Ovary (tissue), 10 donors: ENCODE measurements at regions of chr10 and their contacts with region 1.

Region 1: DNA sequence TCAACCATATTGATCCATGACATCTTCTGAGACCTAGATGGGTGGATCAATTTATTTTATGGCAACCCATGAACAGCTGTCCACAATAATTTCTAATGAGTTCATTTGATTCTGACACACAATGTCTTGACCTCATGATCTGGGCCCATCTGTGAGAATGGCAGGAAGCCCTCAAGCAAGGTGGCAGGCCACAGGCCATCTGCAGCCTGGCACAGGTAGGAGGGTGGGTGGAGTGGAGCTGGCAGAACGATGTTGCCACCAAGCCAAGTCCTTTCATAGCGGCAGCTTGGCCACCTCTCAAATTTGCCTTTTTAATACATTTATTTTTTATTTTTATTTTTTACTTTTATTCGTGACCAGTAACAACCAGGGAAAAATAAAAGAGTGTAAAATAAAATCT is 1181.6 kb upstream of the SORCS1 start:
- DNase-seq: no peak
- H3K4me3 ChIP-seq: no peak overlapping the region
- H3K27ac ChIP-seq: no peak overlapping the region
- H3K4me1 ChIP-seq: no peaks in the 10 kb centered on the region
- H3K27me3 ChIP-seq: no peaks in the 10 kb centered on the region
- CTCF ChIP-seq: no peak
- EP300 ChIP-seq: no peak
- POLR2A ChIP-seq: no peak

Region 2: GRCh38 chr10:109450702-109451101 is 1104.6 kb after region 1 on chr10:
- intact Hi-C with region 1: loop called in 1 of 4 experiments (anchors 5 kb)
- DNase-seq: no peak
- H3K4me3 ChIP-seq: no peak overlapping the region
- H3K27ac ChIP-seq: no peak overlapping the region
- H3K4me1 ChIP-seq: no peaks in the 10 kb centered on the region
- H3K27me3 ChIP-seq: no peaks in the 10 kb centered on the region
- CTCF ChIP-seq: no peak
- EP300 ChIP-seq: no peak
- POLR2A ChIP-seq: no peak